ENCODE measurements at regions of chr19 and their contacts with region 1.

Region 1: GRCh38 chr19:7943444-7944176 is at the start of gene TIMM44:
- DNase-seq: peak; percentile 100
- ATAC-seq: peak; percentile 100
- H3K4me3 ChIP-seq: peak within 1 kb of the TSS; percentile 74 to 77
- H3K27ac ChIP-seq: peak within 1 kb of the TSS; percentile 38 to 89
- H3K4me1 ChIP-seq: no peaks in the 10 kb centered on the region
- H3K27me3 ChIP-seq: no peaks in the 10 kb centered on the region
- total RNA-seq, gene TIMM44: 44.5 to 53.5 TPM

Region 2: GRCh38 chr19:8005534-8006256 is 62.1 kb after region 1 on chr19 and contains the start of gene ELAVL1:
- intact Hi-C with region 1: loop called (anchors 5 kb)
- DNase-seq: peak; percentile 93 to 96
- ATAC-seq: peak; percentile 98
- H3K4me3 ChIP-seq: peak within 1 kb of the TSS; percentile 98 to 99
- H3K27ac ChIP-seq: peak within 1 kb of the TSS; percentile 18 to 52
- H3K4me1 ChIP-seq: peaks cover 0 to 8% of the 10 kb centered on the region in 2 donors
- H3K27me3 ChIP-seq: no peaks in the 10 kb centered on the region
- total RNA-seq, gene ELAVL1: 48.5 to 48.9 TPM

Region 3: DNA sequence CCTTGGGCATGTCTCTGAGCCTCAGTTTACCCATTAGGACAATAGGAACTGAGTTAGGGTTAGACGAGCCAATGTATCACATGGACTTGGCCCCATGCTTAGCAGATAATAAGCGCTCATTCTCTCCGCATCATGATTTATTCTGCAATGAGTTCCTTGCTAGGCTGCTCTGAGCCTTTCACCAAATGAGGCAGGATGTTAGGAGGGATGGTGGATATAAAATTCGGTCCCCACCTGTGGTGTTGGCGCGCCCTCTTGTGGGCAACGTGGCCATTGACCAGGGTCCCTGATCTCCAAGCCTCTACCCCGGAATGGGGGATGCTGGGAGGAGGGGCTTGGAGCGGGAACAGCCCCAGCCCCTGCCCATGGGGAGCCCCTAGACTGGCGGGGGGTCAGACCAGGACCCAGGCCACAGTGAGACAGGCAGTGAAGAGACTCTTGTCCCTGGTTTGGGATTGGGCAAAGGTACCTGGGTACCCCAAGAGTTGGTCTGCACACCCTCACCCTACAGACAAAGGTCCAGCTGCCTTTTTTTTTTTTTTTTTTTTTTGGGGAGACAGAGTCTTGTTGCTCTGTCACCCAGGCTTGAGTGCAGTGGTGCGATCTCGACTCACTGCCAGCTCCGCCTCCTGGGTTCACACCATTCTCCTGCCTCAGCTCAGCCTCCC is 309.4 kb after region 1 on chr19:
- intact Hi-C with region 1: loop called (anchors 1 to 10 kb)
- DNase-seq: peak; percentile 84 to 95
- ATAC-seq: peak; percentile 88
- H3K4me3 ChIP-seq: no peak overlapping the region
- H3K27ac ChIP-seq: no peak overlapping the region
- H3K4me1 ChIP-seq: no peaks in the 10 kb centered on the region
- H3K27me3 ChIP-seq: no peaks in the 10 kb centered on the region

Region 4: GRCh38 chr19:8389891-8390616 is 446.4 kb after region 1 on chr19 and contains the start of gene RAB11B:
- intact Hi-C with region 1: loop called in 1 of 2 experiments (anchors 5 kb)
- DNase-seq: peak; percentile 99 to 100
- ATAC-seq: peak; percentile 98
- H3K4me3 ChIP-seq: peak within 1 kb of the TSS; percentile 76 to 97
- H3K27ac ChIP-seq: peak within 1 kb of the TSS; percentile 80 to 100
- H3K4me1 ChIP-seq: no peaks in the 10 kb centered on the region
- H3K27me3 ChIP-seq: no peaks in the 10 kb centered on the region
- total RNA-seq, gene RAB11B: 119 TPM